MCF 10A (cell line): ENCODE measurements at regions of chr3 and their contacts with region 1.

Region 1: DNA sequence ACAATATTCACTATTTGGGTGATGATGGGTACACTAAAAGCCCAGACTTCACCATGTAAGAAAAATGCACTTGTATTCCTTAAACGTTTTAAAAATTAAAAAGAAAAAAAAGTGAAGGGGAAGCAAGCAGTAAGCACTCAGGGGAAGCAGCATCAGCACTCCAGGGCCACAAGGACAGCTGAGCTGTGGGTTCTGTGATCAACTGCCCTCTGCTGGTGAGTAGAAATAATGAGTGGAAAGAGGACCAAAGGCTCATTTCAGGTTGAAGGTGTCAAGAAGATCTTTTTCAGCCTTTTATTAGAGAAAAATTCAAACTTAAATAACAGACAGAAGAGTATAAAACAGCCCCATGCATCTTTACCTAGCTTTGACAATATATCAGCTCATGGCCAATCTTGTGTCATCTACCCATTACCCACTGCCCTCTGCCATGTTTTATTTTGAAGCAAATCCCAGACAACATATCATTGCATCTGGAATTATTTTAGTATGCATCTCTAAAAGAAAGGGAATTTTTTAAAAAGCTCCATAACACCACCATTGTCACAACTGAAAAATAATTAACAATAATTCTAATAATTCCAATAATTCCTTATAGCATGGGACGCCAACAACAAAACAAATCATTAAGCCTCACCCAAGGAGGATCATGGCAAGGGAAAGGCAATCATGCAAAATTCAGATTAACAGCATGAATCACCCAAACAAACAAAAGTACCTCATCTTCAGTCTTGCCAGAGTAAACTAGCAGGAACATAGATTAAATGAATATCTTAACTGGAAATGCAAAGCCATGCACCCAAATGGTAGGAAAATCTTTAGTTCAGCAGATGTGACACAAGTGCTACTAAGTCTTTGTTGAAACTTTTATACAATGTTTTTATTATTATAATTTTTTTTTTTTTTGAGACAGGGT is 42.5 kb downstream of the TAMM41 start:
- DNase-seq: peak; percentile 64
- H3K4me3 Mint-ChIP-seq: no peak overlapping the region
- H3K27ac Mint-ChIP-seq: no peak overlapping the region
- H3K4me1 Mint-ChIP-seq: no peaks in the 10 kb centered on the region
- H3K27me3 Mint-ChIP-seq: no peaks in the 10 kb centered on the region
- CTCF ChIP-seq: peak; percentile 71

Region 2: GRCh38 chr3:11582191-11582968 is 221.9 kb before region 1 on chr3:
- CTCF ChIA-PET with region 1: no interaction called
- POLR2A ChIA-PET with region 1: no interaction called
- intact Hi-C with region 1: loop called (anchors 10 kb)
- DNase-seq: peak; percentile 85
- H3K4me3 Mint-ChIP-seq: peak overlapping the region; percentile 71
- H3K27ac Mint-ChIP-seq: peak overlapping the region; percentile 82
- H3K4me1 Mint-ChIP-seq: peaks cover 46% of the 10 kb centered on the region
- H3K27me3 Mint-ChIP-seq: no peaks in the 10 kb centered on the region
- CTCF ChIP-seq: no peak

Region 3: GRCh38 chr3:11651900-11652299 is 152.3 kb before region 1 on chr3:
- CTCF ChIA-PET with region 1: interaction called, 7 read pairs
- POLR2A ChIA-PET with region 1: no interaction called
- intact Hi-C with region 1: loop called (anchors 1 kb)
- DNase-seq: peak; percentile 36
- H3K4me3 Mint-ChIP-seq: no peak overlapping the region
- H3K27ac Mint-ChIP-seq: no peak overlapping the region
- H3K4me1 Mint-ChIP-seq: no peaks in the 10 kb centered on the region
- H3K27me3 Mint-ChIP-seq: no peaks in the 10 kb centered on the region
- CTCF ChIP-seq: peak; percentile 46

Region 4: GRCh38 chr3:11819146-11819689 is 15.0 kb after region 1 on chr3:
- CTCF ChIA-PET with region 1: interaction called, 31 read pairs
- POLR2A ChIA-PET with region 1: interaction called, 6 read pairs
- intact Hi-C with region 1: no loop called
- DNase-seq: peak; percentile 56
- H3K4me3 Mint-ChIP-seq: no peak overlapping the region
- H3K27ac Mint-ChIP-seq: no peak overlapping the region
- H3K4me1 Mint-ChIP-seq: peaks cover 30% of the 10 kb centered on the region
- H3K27me3 Mint-ChIP-seq: no peaks in the 10 kb centered on the region
- CTCF ChIP-seq: no peak